ENCODE measurements at regions of chr6 and their contacts with region 1.

Region 1: GRCh38 chr6:149863697-149864577 is at the start of gene LRP11:
- DNase-seq: peak; percentile 66 to 91 (median 80)
- ATAC-seq: peak; percentile 87
- H3K4me3 ChIP-seq: peak within 1 kb of the TSS; percentile 54
- H3K4me3 Mint-ChIP-seq: peak within 1 kb of the TSS; percentile 86
- H3K27ac ChIP-seq: no peak within 1 kb of the TSS
- H3K27ac Mint-ChIP-seq: peak within 1 kb of the TSS; percentile 68
- H3K4me1 ChIP-seq: peaks cover 18% of the 10 kb centered on the region
- H3K4me1 Mint-ChIP-seq: peaks cover 5% of the 10 kb centered on the region
- H3K27me3 ChIP-seq: peaks cover 0 to 3% of the 10 kb centered on the region in 2 experiments
- H3K27me3 Mint-ChIP-seq: peaks cover 22% of the 10 kb centered on the region
- CTCF ChIP-seq: no peak
- total RNA-seq, gene LRP11: 0.75 to 0.99 TPM

Region 2: DNA sequence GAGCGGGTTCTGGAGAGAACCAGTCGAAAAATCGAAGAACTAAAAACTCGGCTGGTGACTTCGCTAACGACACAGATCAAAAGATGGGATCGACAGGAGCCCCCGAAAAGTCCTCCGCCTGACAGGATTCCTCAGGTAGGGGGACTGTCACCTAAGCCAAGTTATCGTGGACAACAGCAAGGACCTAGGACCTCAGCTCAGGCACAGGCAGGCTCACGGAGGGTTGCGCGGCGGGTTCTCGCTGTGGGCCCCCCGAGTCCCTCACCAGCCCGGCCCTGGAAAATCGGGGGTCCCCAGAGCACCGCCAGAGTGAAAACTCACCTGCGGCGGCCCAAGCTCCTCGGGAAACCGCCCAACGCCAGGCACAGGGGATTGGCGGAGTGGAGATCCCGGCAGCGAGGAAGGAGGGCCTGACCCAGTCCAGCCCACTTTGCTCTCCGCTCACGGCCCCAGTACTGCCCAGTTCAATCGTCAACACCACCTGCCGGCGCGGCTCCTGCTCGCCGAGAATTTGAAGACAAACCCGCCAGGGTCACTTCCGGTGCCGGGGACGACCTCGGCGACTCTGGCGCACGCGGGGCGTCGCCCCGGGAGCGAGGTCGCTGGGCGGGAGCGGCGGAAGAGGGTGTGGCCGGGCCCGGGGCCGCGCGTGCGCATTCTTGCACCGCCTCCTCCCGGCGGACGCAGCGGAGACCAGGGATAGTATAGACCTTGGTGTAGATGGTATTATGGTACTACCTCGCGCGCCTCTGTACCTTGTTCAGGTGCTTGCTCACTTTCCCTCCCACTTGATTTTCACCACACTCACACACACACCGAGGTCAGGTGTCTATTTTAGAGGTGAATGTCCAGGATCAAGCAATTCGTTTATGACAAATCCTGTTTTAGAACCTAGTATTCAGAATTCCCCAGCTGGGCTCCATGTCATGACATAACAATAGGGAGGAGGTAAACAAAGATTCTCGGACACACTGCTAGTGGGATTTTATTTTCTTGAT is 215.5 kb before region 1 on chr6 and contains the start of gene KATNA1:
- CTCF ChIA-PET with region 1: no interaction called
- POLR2A ChIA-PET with region 1: no interaction called
- intact Hi-C with region 1: loop called in 1 of 2 experiments (anchors 5 kb)
- DNase-seq: peak; percentile 69 to 93 (median 82)
- ATAC-seq: peak; percentile 88
- H3K4me3 ChIP-seq: peak within 1 kb of the TSS; percentile 100
- H3K4me3 Mint-ChIP-seq: peak within 1 kb of the TSS; percentile 90
- H3K27ac ChIP-seq: peak within 1 kb of the TSS; percentile 66 to 85
- H3K27ac Mint-ChIP-seq: peak within 1 kb of the TSS; percentile 84
- H3K4me1 ChIP-seq: peaks cover 13% of the 10 kb centered on the region
- H3K4me1 Mint-ChIP-seq: peaks cover 41% of the 10 kb centered on the region
- H3K27me3 ChIP-seq: no peaks in the 10 kb centered on the region
- H3K27me3 Mint-ChIP-seq: no peaks in the 10 kb centered on the region
- CTCF ChIP-seq: no peak
- total RNA-seq, gene KATNA1: 17.0 to 18.1 TPM

Region 3: DNA sequence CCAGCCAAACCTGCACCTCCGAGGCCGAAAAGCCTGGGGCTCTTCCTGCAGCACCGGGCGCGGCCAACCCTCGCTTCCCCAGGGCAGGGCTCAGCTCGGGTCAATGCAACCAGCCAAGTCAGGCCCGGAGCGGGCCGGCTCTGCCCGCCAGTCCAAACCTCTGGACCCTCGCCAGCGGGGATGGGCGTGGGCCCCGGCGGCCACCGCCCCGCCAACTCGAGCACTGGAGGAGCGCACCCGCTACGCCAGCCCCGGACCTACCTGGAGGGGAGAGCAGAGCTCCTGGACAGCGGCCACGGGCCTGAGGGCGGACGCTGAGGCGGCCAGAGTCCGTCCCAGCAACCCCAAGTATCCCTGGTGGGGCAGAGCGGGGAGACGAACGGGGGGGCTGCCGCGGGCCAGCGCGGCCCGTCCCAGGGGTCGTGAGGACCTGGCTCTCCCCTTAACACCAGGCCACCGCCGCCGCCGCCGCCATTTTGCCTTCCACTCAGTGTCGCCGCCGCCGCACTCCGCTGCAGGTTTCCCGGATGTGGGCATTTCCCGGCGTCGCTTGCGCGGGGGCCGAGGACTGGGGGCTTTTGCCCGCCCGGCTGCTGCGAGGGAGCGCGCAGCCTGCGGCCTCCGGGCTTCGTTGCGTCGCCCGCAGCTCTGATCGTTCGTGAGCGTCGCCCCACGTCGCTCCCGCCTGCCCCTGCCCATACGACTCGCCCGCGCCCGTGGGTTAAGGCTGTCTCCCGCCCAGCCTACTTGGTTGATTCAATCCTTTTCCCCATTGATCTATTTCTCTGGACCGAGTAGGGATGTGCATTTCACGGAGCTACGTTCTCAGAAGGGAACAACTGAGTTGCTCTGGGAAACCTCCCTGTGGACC is 146.1 kb before region 1 on chr6 and contains the start of gene LATS1:
- CTCF ChIA-PET with region 1: no interaction called
- POLR2A ChIA-PET with region 1: no interaction called
- intact Hi-C with region 1: loop called in 1 of 2 experiments (anchors 2 kb)
- DNase-seq: peak; percentile 85 to 94 (median 89)
- ATAC-seq: peak; percentile 87
- H3K4me3 ChIP-seq: peak within 1 kb of the TSS; percentile 84
- H3K4me3 Mint-ChIP-seq: peak within 1 kb of the TSS; percentile 100
- H3K27ac ChIP-seq: peak within 1 kb of the TSS; percentile 92 to 95
- H3K27ac Mint-ChIP-seq: peak within 1 kb of the TSS; percentile 99
- H3K4me1 ChIP-seq: peaks cover 21% of the 10 kb centered on the region
- H3K4me1 Mint-ChIP-seq: peaks cover 47% of the 10 kb centered on the region
- H3K27me3 ChIP-seq: no peaks in the 10 kb centered on the region
- H3K27me3 Mint-ChIP-seq: no peaks in the 10 kb centered on the region
- CTCF ChIP-seq: no peak
- total RNA-seq, gene LATS1: 36.1 to 39.6 TPM

Region 4: DNA sequence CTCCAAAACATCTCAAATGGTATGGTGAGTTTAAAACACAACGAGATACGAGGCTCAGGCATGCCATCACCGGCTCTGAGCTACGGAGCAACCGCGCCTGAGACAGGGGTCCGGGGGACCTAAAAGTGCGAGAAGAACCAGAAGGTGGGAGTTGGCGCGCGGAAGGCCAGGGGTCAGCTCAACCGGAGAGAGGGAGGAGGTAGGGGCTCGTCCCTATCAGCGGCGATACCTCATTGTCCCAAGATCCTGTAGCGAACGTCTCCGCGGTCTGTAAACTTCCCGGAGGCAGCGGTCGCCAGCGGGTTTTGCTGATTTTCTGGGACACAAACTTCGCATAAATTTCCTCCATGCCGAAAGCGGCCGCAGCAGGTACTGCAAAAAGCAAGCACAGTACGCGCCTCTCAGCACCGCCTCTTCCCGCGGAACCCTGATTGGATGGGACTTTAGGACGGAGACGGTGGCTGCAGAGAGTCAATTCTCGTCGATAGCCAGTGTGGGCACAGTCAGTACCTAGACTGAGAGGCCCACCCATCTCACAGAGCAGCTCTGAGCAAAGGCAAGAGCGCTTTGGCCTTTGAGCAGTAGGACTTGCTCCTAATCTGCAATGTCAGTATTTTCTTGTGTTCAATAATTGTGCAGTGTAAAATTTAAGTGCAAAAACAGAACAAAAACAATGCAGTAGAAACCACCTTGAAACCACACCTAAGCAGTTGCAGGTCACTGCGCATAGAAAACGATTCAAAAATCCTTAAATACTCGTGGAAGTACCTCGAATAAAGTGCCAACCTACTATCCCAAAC is 117.6 kb before region 1 on chr6 and contains the start of gene NUP43:
- CTCF ChIA-PET with region 1: no interaction called
- POLR2A ChIA-PET with region 1: interaction called, 3 read pairs
- intact Hi-C with region 1: loop called in 1 of 2 experiments (anchors 10 kb)
- DNase-seq: peak; percentile 86 to 95 (median 91)
- ATAC-seq: peak; percentile 74
- H3K4me3 ChIP-seq: peak within 1 kb of the TSS; percentile 95
- H3K4me3 Mint-ChIP-seq: peak within 1 kb of the TSS; percentile 97
- H3K27ac ChIP-seq: peak within 1 kb of the TSS; percentile 59 to 65
- H3K27ac Mint-ChIP-seq: peak within 1 kb of the TSS; percentile 96
- H3K4me1 ChIP-seq: peaks cover 38% of the 10 kb centered on the region
- H3K4me1 Mint-ChIP-seq: peaks cover 32% of the 10 kb centered on the region
- H3K27me3 ChIP-seq: no peaks in the 10 kb centered on the region
- H3K27me3 Mint-ChIP-seq: no peaks in the 10 kb centered on the region
- CTCF ChIP-seq: peak; percentile 67
- total RNA-seq, gene NUP43: 14.2 to 14.5 TPM

Region 5: GRCh38 chr6:149834513-149835481 is 29.1 kb before region 1 on chr6:
- CTCF ChIA-PET with region 1: no interaction called
- POLR2A ChIA-PET with region 1: no interaction called
- intact Hi-C with region 1: loop called (anchors 1 to 2 kb)
- DNase-seq: peak; percentile 41 to 85 (median 71)
- ATAC-seq: peak; percentile 86
- H3K4me3 ChIP-seq: no peak overlapping the region
- H3K4me3 Mint-ChIP-seq: no peak overlapping the region
- H3K27ac ChIP-seq: no peak overlapping the region
- H3K27ac Mint-ChIP-seq: no peak overlapping the region
- H3K4me1 ChIP-seq: no peaks in the 10 kb centered on the region
- H3K4me1 Mint-ChIP-seq: peaks cover 5% of the 10 kb centered on the region
- H3K27me3 ChIP-seq: no peaks in the 10 kb centered on the region
- H3K27me3 Mint-ChIP-seq: no peaks in the 10 kb centered on the region
- CTCF ChIP-seq: peak; percentile 93

Region 6: GRCh38 chr6:150004783-150005717 is 141.1 kb after region 1 on chr6:
- CTCF ChIA-PET with region 1: interaction called, 3 read pairs
- POLR2A ChIA-PET with region 1: no interaction called
- intact Hi-C with region 1: loop called in 1 of 2 experiments (anchors 5 kb)
- DNase-seq: peak; percentile 65 to 95 (median 86)
- ATAC-seq: peak; percentile 77
- H3K4me3 ChIP-seq: peak overlapping the region; percentile 86
- H3K4me3 Mint-ChIP-seq: peak overlapping the region; percentile 87
- H3K27ac ChIP-seq: peak overlapping the region; percentile 75 to 89
- H3K27ac Mint-ChIP-seq: peak overlapping the region; percentile 74
- H3K4me1 ChIP-seq: peaks cover 49% of the 10 kb centered on the region
- H3K4me1 Mint-ChIP-seq: peaks cover 29% of the 10 kb centered on the region
- H3K27me3 ChIP-seq: peaks cover 6 to 15% of the 10 kb centered on the region in 2 experiments
- H3K27me3 Mint-ChIP-seq: peaks cover 24% of the 10 kb centered on the region
- CTCF ChIP-seq: no peak

Measured in CD4-positive, alpha-beta T cell (primary cell).